ENCODE measurements at regions of chr22 and their contacts with region 1.

Region 1: GRCh38 chr22:45096256-45096907 is 67.3 kb upstream of the NUP50 start:
- DNase-seq: peak; percentile 78
- H3K4me3 ChIP-seq: no peak overlapping the region
- H3K27ac ChIP-seq: no peak overlapping the region
- H3K4me1 ChIP-seq: no peaks in the 10 kb centered on the region
- H3K27me3 ChIP-seq: peaks cover 3% of the 10 kb centered on the region
- CTCF ChIP-seq: peak; percentile 92

Region 2: GRCh38 chr22:44819971-44820631 is 276.3 kb before region 1 on chr22:
- CTCF ChIA-PET with region 1: interaction called, 9 read pairs
- POLR2A ChIA-PET with region 1: no interaction called
- intact Hi-C with region 1: loop called (anchors 1 kb)
- DNase-seq: no peak
- H3K4me3 ChIP-seq: no peak overlapping the region
- H3K27ac ChIP-seq: no peak overlapping the region
- H3K4me1 ChIP-seq: no peaks in the 10 kb centered on the region
- H3K27me3 ChIP-seq: peaks cover 21% of the 10 kb centered on the region
- CTCF ChIP-seq: no peak

Region 3: DNA sequence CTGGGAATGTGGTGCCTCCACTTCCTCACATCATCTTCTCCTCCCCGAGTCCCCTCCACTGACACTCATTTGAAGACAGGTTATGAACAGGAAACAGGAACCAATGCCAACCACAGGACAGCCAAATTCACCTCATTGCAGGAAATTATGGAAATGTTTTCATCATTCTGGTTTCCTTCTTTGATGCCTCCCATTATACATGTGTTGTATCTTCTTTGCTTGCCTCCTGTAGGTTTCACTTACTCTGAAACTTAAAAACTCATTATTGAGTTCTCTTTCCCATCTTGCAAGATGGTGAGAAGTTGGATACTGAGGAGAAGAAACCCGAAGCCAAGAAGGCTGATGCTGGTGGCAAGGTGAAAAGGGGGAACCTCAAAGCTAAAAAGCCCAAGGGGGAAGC is 195.1 kb before region 1 on chr22:
- CTCF ChIA-PET with region 1: interaction called, 10 read pairs
- POLR2A ChIA-PET with region 1: no interaction called
- intact Hi-C with region 1: no loop called
- DNase-seq: no peak
- H3K4me3 ChIP-seq: no peak overlapping the region
- H3K27ac ChIP-seq: no peak overlapping the region
- H3K4me1 ChIP-seq: no peaks in the 10 kb centered on the region
- H3K27me3 ChIP-seq: no peaks in the 10 kb centered on the region
- CTCF ChIP-seq: no peak

Region 4: GRCh38 chr22:44975427-44976262 is 120.7 kb before region 1 on chr22:
- CTCF ChIA-PET with region 1: no interaction called
- POLR2A ChIA-PET with region 1: no interaction called
- intact Hi-C with region 1: loop called (anchors 1 kb)
- DNase-seq: peak; percentile 91
- H3K4me3 ChIP-seq: no peak overlapping the region
- H3K27ac ChIP-seq: no peak overlapping the region
- H3K4me1 ChIP-seq: no peaks in the 10 kb centered on the region
- H3K27me3 ChIP-seq: no peaks in the 10 kb centered on the region
- CTCF ChIP-seq: peak; percentile 87

Measured in A673 (cell line).